Endothelial cell of umbilical vein (primary cell): ENCODE measurements at regions of chrX and their contacts with region 1.

Region 1: DNA sequence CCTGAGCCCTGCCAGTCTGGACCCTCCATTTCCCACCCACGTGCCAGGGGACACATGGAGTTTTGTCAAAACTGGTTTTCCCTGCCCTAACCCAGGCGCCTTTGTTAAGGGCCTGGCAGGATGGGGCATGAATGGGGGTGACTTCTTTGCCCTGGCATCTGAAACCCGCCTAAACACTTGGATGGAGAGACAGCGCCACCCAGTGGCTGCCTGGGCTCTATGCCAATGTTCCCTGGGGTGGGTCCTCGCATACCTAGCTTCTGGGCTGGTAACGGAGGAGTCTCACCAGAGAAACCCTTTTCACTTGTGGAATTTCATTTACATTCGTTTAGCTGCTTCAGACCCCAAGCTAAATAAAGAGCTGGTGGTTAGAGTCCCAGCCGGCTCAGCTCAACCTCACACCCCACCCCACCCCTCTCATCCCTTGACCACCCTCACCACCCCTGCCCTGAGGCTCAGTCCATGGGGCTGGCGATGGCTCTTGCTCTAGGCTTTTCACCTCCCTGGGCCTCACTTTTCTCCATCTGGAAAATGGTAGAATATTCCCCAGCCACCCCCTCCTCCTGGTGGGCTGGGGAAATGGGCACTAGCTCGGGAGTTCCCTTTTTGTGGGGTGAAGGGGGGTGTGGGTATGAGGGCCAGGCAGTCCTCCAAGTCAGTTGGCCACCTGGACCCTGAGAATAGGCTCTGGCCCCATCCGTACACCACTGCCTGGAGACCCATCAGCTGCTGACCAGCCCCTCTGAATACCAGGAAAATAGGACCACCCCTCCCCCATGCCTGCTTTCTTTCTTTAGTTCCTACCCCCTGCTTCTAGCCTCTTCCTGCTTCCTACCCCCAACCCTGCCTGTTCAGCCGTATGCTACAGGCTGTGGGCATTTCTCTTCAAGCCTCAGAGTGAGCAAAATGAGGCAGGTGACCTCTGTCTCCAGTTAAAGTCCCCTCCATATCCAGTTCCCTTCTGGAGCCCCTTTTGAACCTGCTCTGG is 57.1 kb upstream of the PJA1 start:
- DNase-seq: peak; percentile 39
- H3K4me3 ChIP-seq: no peak overlapping the region
- H3K27ac ChIP-seq: no peak overlapping the region
- H3K4me1 ChIP-seq: no peaks in the 10 kb centered on the region
- H3K27me3 ChIP-seq: no peaks in the 10 kb centered on the region
- CTCF ChIP-seq: peak; percentile 61 to 76
- POLR2A ChIP-seq: no peak

Region 2: GRCh38 chrX:68732906-68733493 is 489.4 kb before region 1 on chrX:
- CTCF ChIA-PET with region 1: interaction called, 17 read pairs
- POLR2A ChIA-PET with region 1: no interaction called
- dilution Hi-C with region 1: no loop called
- intact Hi-C with region 1: loop called (anchors 1 kb)
- DNase-seq: peak; percentile 12
- H3K4me3 ChIP-seq: no peak overlapping the region
- H3K27ac ChIP-seq: no peak overlapping the region
- H3K4me1 ChIP-seq: no peaks in the 10 kb centered on the region
- H3K27me3 ChIP-seq: no peaks in the 10 kb centered on the region
- CTCF ChIP-seq: peak; percentile 58 to 69
- POLR2A ChIP-seq: no peak

Region 3: DNA sequence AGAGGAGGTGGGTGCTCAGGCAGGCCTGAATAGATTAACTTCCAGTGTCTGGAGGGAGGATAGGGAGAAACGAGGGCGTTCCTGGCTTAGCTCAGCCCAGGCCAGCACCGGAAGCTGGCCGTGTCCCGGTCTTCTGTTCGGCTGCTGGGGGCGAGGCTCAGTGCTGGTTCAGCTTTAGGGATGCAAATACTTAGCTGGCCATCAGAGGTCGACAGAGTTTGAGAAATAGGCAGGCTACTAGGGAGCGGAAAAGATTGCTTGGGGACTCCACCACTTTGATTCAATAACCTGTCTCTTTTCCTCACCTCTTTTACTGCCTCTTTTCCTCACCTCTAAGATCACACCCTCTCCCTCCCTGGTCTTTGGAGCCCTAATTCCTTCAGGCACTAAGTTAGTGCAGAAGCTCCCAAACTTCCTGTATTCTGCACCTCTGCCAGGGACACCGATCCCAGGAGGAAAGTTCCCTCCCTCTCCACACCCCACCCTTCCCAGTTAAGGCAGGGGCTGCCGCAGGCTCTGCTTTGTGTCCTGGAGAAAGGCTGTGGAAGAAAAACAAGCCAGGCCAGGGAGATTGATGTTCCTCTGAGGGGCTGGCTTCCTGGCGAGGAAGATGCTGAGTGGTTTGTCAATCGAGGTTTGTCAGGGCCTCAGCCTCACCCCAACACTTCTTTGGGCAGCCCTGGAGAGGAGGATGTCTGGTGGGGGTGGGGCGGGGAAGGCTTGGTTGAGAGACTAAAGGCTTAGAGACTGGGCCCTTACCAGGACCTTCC is 399.6 kb before region 1 on chrX:
- CTCF ChIA-PET with region 1: interaction called, 144 read pairs
- POLR2A ChIA-PET with region 1: interaction called, 4 read pairs
- dilution Hi-C with region 1: no loop called
- intact Hi-C with region 1: loop called (anchors 1 kb)
- DNase-seq: peak; percentile 28
- H3K4me3 ChIP-seq: no peak overlapping the region
- H3K27ac ChIP-seq: no peak overlapping the region
- H3K4me1 ChIP-seq: no peaks in the 10 kb centered on the region
- H3K27me3 ChIP-seq: peaks cover 0 to 2% of the 10 kb centered on the region in 2 experiments
- CTCF ChIP-seq: peak; percentile 39 to 56
- POLR2A ChIP-seq: no peak

Region 4: DNA sequence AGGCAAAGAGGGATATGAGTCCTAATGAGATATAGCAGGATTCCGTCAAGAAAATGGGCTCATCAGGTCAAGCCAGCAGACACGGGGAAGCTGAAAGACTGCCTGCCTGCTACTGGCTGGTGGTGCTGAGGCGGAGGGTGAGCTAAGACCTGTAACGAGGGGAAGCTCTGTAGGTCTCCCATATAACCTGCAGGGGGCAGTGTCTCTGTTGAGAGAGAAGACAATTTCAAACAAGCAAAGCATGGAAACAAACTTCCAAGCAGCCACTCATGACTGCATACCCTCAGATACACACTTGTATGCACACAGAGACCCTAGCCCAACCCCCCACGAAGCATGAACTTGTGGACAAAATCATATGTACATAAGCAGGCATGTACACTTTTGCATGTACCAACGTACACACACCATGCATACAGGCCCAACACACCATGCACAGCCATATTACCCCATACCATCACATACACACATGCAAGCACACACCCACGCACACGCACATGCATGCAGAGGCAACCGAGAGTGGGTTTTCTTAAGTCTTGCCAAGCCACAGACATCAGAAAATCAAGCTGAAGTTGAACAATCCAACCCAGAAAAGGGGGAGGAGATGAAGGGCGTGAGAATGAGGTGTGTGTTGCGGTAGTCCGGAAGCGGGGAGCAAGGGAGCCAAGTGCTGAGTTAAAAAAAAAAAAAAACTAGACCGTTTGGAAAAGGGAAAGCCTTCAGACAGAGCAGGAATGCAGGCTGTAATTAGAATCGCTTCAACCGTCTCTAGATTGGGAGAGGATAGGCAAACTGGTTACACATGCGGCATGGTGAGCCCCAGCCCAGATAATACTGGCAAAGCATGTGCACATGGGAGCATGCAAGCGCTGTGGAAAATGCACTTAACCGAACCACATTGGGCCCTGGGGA is 128.2 kb before region 1 on chrX:
- CTCF ChIA-PET with region 1: interaction called, 10 read pairs
- POLR2A ChIA-PET with region 1: no interaction called
- dilution Hi-C with region 1: no loop called
- intact Hi-C with region 1: loop called (anchors 1 kb)
- DNase-seq: peak; percentile 26
- H3K4me3 ChIP-seq: no peak overlapping the region
- H3K27ac ChIP-seq: no peak overlapping the region
- H3K4me1 ChIP-seq: no peaks in the 10 kb centered on the region
- H3K27me3 ChIP-seq: no peaks in the 10 kb centered on the region
- CTCF ChIP-seq: peak; percentile 32 to 59
- POLR2A ChIP-seq: no peak

Region 5: DNA sequence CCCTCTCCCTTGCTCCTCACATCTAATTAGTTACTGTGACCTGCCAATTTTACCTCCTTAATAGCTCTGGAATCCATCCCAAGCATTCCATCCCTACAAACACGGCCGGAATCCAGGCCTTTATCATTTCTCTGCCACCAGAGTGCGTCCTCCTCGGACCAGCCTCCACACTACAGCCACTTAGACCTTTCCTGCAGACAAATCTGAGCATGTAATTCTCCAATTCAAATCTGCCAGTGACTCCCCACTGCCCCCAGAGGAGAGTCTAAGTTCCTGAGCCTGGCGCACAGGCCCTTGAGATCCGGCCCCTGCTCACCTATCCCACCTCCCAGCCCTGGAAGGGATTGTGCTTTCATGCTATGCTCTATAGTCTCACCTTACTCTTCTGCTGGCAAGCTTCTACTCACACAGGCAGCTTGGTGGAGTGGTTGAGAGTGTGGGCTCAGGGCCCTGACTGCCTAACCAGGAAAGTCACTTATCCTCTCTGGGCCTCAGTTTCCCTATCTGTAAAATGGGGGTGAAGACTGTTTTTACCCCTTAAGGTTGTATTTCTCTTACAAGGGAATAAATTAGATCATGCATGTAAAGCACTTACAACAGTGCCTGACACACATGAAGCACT is 88.4 kb before region 1 on chrX:
- CTCF ChIA-PET with region 1: interaction called, 3 read pairs
- POLR2A ChIA-PET with region 1: no interaction called
- dilution Hi-C with region 1: no loop called
- intact Hi-C with region 1: loop called (anchors 1 kb)
- DNase-seq: peak; percentile 30
- H3K4me3 ChIP-seq: no peak overlapping the region
- H3K27ac ChIP-seq: no peak overlapping the region
- H3K4me1 ChIP-seq: no peaks in the 10 kb centered on the region
- H3K27me3 ChIP-seq: peaks cover 2 to 14% of the 10 kb centered on the region in 2 experiments
- CTCF ChIP-seq: peak; percentile 25 to 49
- POLR2A ChIP-seq: no peak

Region 6: DNA sequence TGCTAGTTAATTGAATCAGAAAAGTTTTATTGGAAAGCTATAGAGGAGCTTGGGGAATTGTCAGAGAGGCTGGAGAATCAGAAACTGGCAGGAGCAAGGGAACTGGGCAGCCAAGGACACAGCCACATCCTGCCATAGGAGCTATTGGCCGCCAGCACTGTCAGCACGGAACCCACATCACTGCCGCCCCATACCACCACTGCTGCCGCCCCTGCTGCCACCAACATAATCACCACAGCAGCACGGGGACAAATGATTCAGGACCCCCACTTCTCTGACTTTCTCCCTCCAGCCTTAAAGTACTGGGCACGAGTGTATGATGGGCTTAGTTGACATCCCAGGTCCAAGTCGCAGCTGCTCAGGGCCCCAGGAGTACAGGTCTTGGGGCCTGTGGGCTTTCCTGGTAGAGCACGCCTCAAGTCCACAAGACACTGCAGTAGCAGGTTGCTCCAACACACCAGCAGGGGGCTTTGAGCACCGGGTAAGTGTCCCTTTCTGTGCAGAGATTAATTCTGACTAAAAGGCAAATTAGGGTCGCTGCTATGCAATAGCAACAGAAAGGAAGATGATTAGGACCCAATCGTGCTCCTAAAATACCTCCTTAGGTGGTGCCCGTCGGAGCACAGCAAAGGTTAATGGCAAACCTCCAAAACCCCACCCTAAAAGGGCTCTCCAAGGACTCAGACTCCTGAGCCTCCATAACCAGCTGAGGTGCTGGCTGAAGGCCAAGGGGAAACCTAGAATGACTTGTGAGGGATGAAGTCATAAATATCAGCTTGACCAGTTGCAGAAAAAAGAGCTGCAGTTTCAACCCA is 64.0 kb before region 1 on chrX:
- CTCF ChIA-PET with region 1: interaction called, 3 read pairs
- POLR2A ChIA-PET with region 1: no interaction called
- dilution Hi-C with region 1: no loop called
- intact Hi-C with region 1: loop called (anchors 1 kb)
- DNase-seq: peak; percentile 71
- H3K4me3 ChIP-seq: no peak overlapping the region
- H3K27ac ChIP-seq: no peak overlapping the region
- H3K4me1 ChIP-seq: peaks cover 2% of the 10 kb centered on the region
- H3K27me3 ChIP-seq: no peaks in the 10 kb centered on the region
- CTCF ChIP-seq: peak; percentile 44 to 62
- POLR2A ChIP-seq: no peak

Region 7: GRCh38 chrX:69189576-69190371 is 32.6 kb before region 1 on chrX:
- CTCF ChIA-PET with region 1: no interaction called
- POLR2A ChIA-PET with region 1: no interaction called
- dilution Hi-C with region 1: no loop called
- intact Hi-C with region 1: no loop called
- DNase-seq: no peak
- H3K4me3 ChIP-seq: no peak overlapping the region
- H3K27ac ChIP-seq: no peak overlapping the region
- H3K4me1 ChIP-seq: no peaks in the 10 kb centered on the region
- H3K27me3 ChIP-seq: no peaks in the 10 kb centered on the region
- CTCF ChIP-seq: no peak
- POLR2A ChIP-seq: no peak

Region 8: GRCh38 chrX:69285881-69286564 is 63.6 kb after region 1 on chrX:
- CTCF ChIA-PET with region 1: interaction called, 4 read pairs
- POLR2A ChIA-PET with region 1: no interaction called
- dilution Hi-C with region 1: no loop called
- intact Hi-C with region 1: loop called (anchors 10 kb)
- DNase-seq: no peak
- H3K4me3 ChIP-seq: peak overlapping the region in 1 of 3 experiments; percentile 33
- H3K27ac ChIP-seq: no peak overlapping the region
- H3K4me1 ChIP-seq: peaks cover 3% of the 10 kb centered on the region
- H3K27me3 ChIP-seq: no peaks in the 10 kb centered on the region
- CTCF ChIP-seq: peak; percentile 61 to 86
- POLR2A ChIP-seq: no peak

Region 9: GRCh38 chrX:69664693-69665092 is 442.3 kb after region 1 on chrX:
- CTCF ChIA-PET with region 1: no interaction called
- POLR2A ChIA-PET with region 1: no interaction called
- dilution Hi-C with region 1: no loop called
- intact Hi-C with region 1: no loop called
- DNase-seq: no peak
- H3K4me3 ChIP-seq: no peak overlapping the region
- H3K27ac ChIP-seq: no peak overlapping the region
- H3K4me1 ChIP-seq: no peaks in the 10 kb centered on the region
- H3K27me3 ChIP-seq: no peaks in the 10 kb centered on the region
- CTCF ChIP-seq: no peak
- POLR2A ChIP-seq: no peak